Right ventricle myocardium inferior (tissue), 1 donor: ENCODE measurements at regions of chr4 and their contacts with region 1.

Region 1: DNA sequence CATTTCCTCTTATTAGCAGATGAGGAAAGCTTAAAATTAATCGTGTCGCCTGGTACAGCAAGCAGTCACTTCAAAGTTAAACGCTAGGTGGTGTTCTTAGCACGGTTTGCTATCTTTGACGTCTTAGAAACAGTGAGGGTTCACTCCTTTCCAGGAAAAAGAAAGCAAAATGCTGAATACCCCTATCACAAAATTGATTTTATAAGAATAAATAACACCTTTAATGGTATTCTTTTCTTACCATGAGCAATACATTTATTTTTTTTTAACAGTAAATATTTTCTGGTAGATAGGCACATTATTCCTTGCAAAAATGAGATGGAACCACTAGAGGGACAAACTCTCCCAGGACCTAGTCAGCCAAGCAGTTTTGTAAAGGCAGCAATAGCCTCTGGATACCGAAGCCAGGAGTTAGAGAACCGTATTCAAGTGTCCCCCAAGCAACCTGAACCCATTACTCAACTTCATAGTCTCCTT is 153.9 kb downstream of the KDR start:
- DNase-seq: no peak
- ATAC-seq: peak; percentile 79

Region 2: GRCh38 chr4:55553441-55554201 is 582.1 kb after region 1 on chr4:
- intact Hi-C with region 1: loop called (anchors 2 kb)
- DNase-seq: no peak
- ATAC-seq: peak; percentile 72